CD4-positive, alpha-beta memory T cell (primary cell): ENCODE measurements at regions of chr2 and their contacts with region 1.

Region 1: GRCh38 chr2:174553811-174554493 is 43.7 kb downstream of the WIPF1 start:
- DNase-seq: peak; percentile 33 to 58 (median 49)
- H3K4me3 ChIP-seq: no peak overlapping the region
- H3K4me3 Mint-ChIP-seq: peak overlapping the region; percentile 57 to 85 (median 74)
- H3K27ac ChIP-seq: peak overlapping the region; percentile 67
- H3K27ac Mint-ChIP-seq: peak overlapping the region; percentile 83 to 97 (median 89)
- H3K4me1 ChIP-seq: peaks cover 39% of the 10 kb centered on the region
- H3K4me1 Mint-ChIP-seq: peaks cover 31 to 52% (median 37%) of the 10 kb centered on the region in 4 donors
- H3K27me3 ChIP-seq: no peaks in the 10 kb centered on the region
- H3K27me3 Mint-ChIP-seq: no peaks in the 10 kb centered on the region

Region 2: DNA sequence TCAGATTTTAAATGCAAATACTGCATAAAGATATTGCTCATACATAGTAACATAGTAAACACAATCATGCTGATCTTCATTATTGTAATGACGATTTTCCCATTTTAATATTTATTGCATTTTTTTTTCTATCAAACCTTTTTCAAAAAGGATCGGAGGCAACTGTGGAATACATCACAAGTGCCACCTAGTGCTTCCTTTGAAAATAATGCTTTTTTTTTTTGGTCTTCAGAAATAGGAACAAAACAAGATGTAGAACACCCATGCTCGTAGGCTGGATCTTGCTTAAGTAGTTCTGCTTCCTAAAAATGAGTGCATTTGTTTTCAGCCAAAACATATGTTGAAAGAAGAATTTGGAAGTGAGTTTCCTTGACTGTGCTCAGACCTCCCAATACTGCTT is 31.4 kb before region 1 on chr2:
- CTCF ChIA-PET with region 1: no interaction called
- POLR2A ChIA-PET with region 1: no interaction called
- intact Hi-C with region 1: no loop called
- DNase-seq: peak in 2 of 5 donors; percentile 7 to 13
- H3K4me3 ChIP-seq: no peak overlapping the region
- H3K4me3 Mint-ChIP-seq: no peak overlapping the region
- H3K27ac ChIP-seq: no peak overlapping the region
- H3K27ac Mint-ChIP-seq: no peak overlapping the region
- H3K4me1 ChIP-seq: no peaks in the 10 kb centered on the region
- H3K4me1 Mint-ChIP-seq: peaks cover 5 to 9% (median 8%) of the 10 kb centered on the region in 4 donors
- H3K27me3 ChIP-seq: no peaks in the 10 kb centered on the region
- H3K27me3 Mint-ChIP-seq: peaks cover 0 to 2% of the 10 kb centered on the region in 2 donors

Region 3: DNA sequence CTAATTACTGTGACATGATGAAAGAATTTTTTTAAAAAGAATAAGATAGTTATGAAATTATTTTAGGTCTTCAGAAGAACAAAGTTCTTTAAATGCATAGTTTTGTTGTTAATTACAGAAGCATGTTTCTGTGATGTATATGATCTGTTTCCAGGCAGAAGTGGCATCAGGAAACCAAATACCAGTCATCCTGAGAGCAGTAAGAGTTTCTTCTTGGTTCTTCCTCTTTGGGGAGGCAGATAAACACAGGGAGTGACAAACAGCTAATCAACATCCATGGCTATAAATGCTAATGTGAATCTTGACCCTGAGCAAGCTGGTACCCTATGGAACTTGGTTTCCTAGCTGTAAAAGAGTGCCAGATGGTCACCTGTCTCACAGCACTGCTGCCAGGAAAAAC is 14.5 kb after region 1 on chr2:
- CTCF ChIA-PET with region 1: no interaction called
- POLR2A ChIA-PET with region 1: interaction called, 8 read pairs
- intact Hi-C with region 1: loop called (anchors 2 kb)
- DNase-seq: no peak
- H3K4me3 ChIP-seq: no peak overlapping the region
- H3K4me3 Mint-ChIP-seq: no peak overlapping the region
- H3K27ac ChIP-seq: no peak overlapping the region
- H3K27ac Mint-ChIP-seq: peak overlapping the region in 5 of 7 donors; percentile 8 to 77 (median 42)
- H3K4me1 ChIP-seq: peaks cover 27% of the 10 kb centered on the region
- H3K4me1 Mint-ChIP-seq: peaks cover 24 to 51% (median 40%) of the 10 kb centered on the region in 4 donors
- H3K27me3 ChIP-seq: no peaks in the 10 kb centered on the region
- H3K27me3 Mint-ChIP-seq: no peaks in the 10 kb centered on the region